CD14-positive monocyte (primary cell): ENCODE measurements at regions of chr15 and their contacts with region 1.

Region 1: GRCh38 chr15:45268135-45268534 is 16.1 kb downstream of the SLC28A2 start:
- DNase-seq: no peak
- H3K4me3 ChIP-seq: no peak overlapping the region
- H3K4me3 Mint-ChIP-seq: no peak overlapping the region
- H3K27ac ChIP-seq: no peak overlapping the region
- H3K27ac Mint-ChIP-seq: no peak overlapping the region
- H3K4me1 ChIP-seq: no peaks in the 10 kb centered on the region
- H3K4me1 Mint-ChIP-seq: no peaks in the 10 kb centered on the region
- H3K27me3 ChIP-seq: no peaks in the 10 kb centered on the region
- H3K27me3 Mint-ChIP-seq: peaks cover 0 to 1% (median 0%) of the 10 kb centered on the region in 3 donors
- CTCF ChIP-seq: no peak

Region 2: GRCh38 chr15:45179221-45179985 is 88.7 kb before region 1 on chr15:
- intact Hi-C with region 1: loop called in 1 of 2 experiments (anchors 10 kb)
- DNase-seq: peak in 2 of 3 donors; percentile 32 to 36
- H3K4me3 ChIP-seq: no peak overlapping the region
- H3K4me3 Mint-ChIP-seq: no peak overlapping the region
- H3K27ac ChIP-seq: no peak overlapping the region
- H3K27ac Mint-ChIP-seq: no peak overlapping the region
- H3K4me1 ChIP-seq: peaks cover 11 to 15% of the 10 kb centered on the region in 2 donors
- H3K4me1 Mint-ChIP-seq: peaks cover 22% of the 10 kb centered on the region
- H3K27me3 ChIP-seq: no peaks in the 10 kb centered on the region
- H3K27me3 Mint-ChIP-seq: peaks cover 0 to 8% (median 0%) of the 10 kb centered on the region in 3 donors
- CTCF ChIP-seq: peak; percentile 64

Region 3: DNA sequence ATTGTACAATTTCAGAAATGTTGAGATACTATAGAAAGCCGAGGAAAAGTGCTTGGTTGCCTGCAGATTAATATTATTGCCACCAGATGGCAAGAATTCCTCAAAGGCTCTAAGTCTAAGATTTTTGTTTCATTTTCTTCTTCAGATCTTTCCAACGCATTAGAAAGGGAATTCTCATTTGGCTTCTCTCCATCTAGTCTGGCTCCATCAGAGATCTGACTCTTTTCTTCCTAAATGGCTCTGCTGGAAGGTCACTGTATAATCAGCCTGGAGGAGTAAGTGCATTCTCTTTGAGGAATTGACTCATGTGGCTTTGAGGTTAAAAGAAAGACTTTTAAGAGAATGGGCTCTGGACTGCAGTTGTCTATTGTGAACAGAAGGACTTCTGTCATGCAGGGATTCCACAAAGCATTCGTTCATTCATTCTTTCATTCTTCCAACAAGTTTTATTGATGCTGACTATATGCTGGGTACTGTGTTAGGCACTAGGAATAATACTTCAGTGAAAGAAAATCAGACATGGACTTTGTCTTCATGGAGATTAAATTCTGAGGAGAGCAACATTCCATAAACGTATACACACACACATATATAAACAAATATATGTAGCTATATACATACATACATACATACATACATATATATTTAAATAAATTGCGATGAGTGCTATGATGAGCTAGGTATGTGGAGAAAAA is 39.2 kb after region 1 on chr15:
- intact Hi-C with region 1: no loop called
- DNase-seq: peak; percentile 4 to 30 (median 16)
- H3K4me3 ChIP-seq: peak overlapping the region in 2 of 3 experiments; percentile 19 to 58
- H3K4me3 Mint-ChIP-seq: peak overlapping the region; percentile 59 to 83
- H3K27ac ChIP-seq: no peak overlapping the region
- H3K27ac Mint-ChIP-seq: peak overlapping the region in 1 of 7 donors; percentile 15
- H3K4me1 ChIP-seq: peaks cover 4% of the 10 kb centered on the region in 2 donors
- H3K4me1 Mint-ChIP-seq: peaks cover 9% of the 10 kb centered on the region
- H3K27me3 ChIP-seq: peaks cover 2 to 19% of the 10 kb centered on the region in 2 donors
- H3K27me3 Mint-ChIP-seq: peaks cover 3 to 24% (median 18%) of the 10 kb centered on the region in 3 donors
- CTCF ChIP-seq: peak; percentile 66

Region 4: DNA sequence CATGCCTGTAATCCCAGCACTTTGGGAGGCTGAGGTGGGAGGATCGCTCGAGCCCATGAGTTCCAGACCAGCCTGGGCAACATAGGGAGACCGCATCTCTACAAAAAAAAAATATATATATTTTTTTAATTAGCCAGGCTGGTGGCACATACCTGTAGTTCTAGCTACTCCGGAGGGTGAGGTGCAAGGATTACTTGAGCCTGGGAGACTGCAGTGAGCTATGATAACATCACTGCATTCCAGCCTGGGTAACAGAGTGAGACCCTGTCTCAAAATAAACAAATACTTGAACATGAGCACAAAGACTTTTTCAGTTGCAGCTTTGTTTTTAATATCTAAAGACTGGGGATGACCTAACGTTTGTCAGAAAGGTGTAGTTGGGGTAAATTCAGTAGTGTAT is 141.5 kb after region 1 on chr15:
- intact Hi-C with region 1: no loop called
- DNase-seq: no peak
- H3K4me3 ChIP-seq: no peak overlapping the region
- H3K4me3 Mint-ChIP-seq: no peak overlapping the region
- H3K27ac ChIP-seq: no peak overlapping the region
- H3K27ac Mint-ChIP-seq: no peak overlapping the region
- H3K4me1 ChIP-seq: peaks cover 5% of the 10 kb centered on the region in 2 donors
- H3K4me1 Mint-ChIP-seq: peaks cover 8% of the 10 kb centered on the region
- H3K27me3 ChIP-seq: no peaks in the 10 kb centered on the region
- H3K27me3 Mint-ChIP-seq: no peaks in the 10 kb centered on the region
- CTCF ChIP-seq: no peak